Heart right ventricle (tissue), 16 donors: ENCODE measurements at regions of chr4 and their contacts with region 1.

Region 1: GRCh38 chr4:38319456-38320342 is 344.3 kb upstream of the KLF3 start:
- DNase-seq: peak; percentile 96 to 97
- ATAC-seq: peak; percentile 74 to 91 (median 85)
- H3K4me3 ChIP-seq: peak overlapping the region in 9 of 10 donors; percentile 22 to 45 (median 37)
- H3K27ac ChIP-seq: peak overlapping the region; percentile 14 to 92 (median 86)
- H3K4me1 ChIP-seq: peaks cover 6 to 48% (median 26%) of the 10 kb centered on the region in 9 donors
- H3K27me3 ChIP-seq: no peaks in the 10 kb centered on the region
- CTCF ChIP-seq: peak; percentile 99 to 100 (median 99)

Region 2: DNA sequence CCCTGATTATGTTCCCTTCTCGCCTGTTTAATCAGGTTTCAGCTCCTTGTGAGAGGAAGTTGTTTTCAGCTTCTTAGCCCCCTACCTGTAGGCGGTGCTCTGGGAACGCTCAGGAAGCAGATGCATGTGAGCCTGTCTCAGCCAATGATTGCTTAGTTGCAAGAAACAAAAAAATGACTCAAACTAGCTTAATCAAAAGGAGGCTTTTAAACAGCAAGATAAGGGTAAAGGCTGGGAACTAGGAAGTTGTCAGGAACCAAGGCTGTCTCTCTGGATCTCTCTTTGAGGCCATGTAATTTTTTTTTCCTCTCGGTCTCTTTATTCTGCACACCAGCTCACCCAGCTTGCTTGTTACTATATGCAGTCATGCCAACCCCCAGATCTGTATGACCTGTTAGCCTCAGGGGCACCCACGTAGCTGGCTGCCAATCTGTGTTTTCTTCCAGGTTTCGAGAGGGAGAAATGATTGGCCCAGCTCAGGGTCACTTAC is 250.4 kb before region 1 on chr4:
- intact Hi-C with region 1: loop called in 8 of 10 experiments (anchors 5 to 10 kb)
- DNase-seq: no peak
- ATAC-seq: peak in 6 of 8 donors; percentile 23 to 54 (median 36)
- H3K4me3 ChIP-seq: no peak overlapping the region
- H3K27ac ChIP-seq: peak overlapping the region in 7 of 10 donors; percentile 30 to 86 (median 59)
- H3K4me1 ChIP-seq: peaks cover 6 to 80% (median 53%) of the 10 kb centered on the region in 9 donors
- H3K27me3 ChIP-seq: no peaks in the 10 kb centered on the region
- CTCF ChIP-seq: peak in 6 of 9 donors; percentile 18 to 61 (median 37)

Region 3: GRCh38 chr4:38275331-38276100 is 44.2 kb before region 1 on chr4:
- intact Hi-C with region 1: no loop called
- DNase-seq: no peak
- ATAC-seq: no peak
- H3K4me3 ChIP-seq: no peak overlapping the region
- H3K27ac ChIP-seq: no peak overlapping the region
- H3K4me1 ChIP-seq: peaks cover 0 to 6% (median 0%) of the 10 kb centered on the region in 9 donors
- H3K27me3 ChIP-seq: no peaks in the 10 kb centered on the region
- CTCF ChIP-seq: no peak

Region 4: DNA sequence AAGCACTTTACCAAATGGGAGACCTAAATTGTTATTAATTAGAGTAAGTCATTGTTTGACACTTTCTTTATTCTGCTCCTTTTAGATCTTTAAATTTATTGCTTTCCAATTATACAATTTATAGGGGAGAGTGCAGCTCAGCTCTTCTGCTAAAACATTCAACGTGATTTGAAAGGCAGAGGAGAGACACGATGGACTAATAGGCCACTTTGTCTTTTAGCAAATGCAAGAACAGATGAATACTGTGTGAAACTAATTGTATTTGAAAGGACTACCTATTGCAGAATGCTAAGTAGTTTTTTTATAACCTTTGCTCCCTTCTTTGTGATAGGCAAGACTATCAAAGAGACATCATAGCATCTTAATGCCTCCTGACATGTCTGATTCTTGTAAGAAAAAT is 23.9 kb after region 1 on chr4:
- intact Hi-C with region 1: no loop called
- DNase-seq: no peak
- ATAC-seq: no peak
- H3K4me3 ChIP-seq: no peak overlapping the region
- H3K27ac ChIP-seq: no peak overlapping the region
- H3K4me1 ChIP-seq: no peaks in the 10 kb centered on the region
- H3K27me3 ChIP-seq: no peaks in the 10 kb centered on the region
- CTCF ChIP-seq: no peak

Region 5: DNA sequence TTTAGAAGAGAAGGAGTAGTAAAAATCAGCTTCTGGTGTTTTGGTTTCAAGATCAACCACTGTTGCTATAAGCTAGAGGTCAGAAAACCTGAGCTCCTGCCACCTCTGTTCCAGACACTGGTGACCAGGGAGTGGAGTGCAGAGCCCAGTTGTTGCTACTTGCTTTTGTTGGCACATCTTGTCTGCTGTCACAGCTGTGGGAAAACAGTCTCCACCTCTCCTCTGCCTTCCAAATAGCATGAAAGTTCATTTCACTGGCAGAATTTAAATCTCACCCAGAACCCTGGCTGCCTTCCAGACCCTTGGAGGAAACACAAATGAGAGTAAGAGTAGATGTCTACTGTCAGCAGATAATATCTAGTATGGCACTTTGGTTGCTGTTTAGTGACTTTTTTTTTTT is 46.8 kb after region 1 on chr4:
- intact Hi-C with region 1: loop called in 1 of 10 experiments (anchors 5 kb)
- DNase-seq: peak; percentile 18 to 19
- ATAC-seq: peak; percentile 64 to 89 (median 80)
- H3K4me3 ChIP-seq: no peak overlapping the region
- H3K27ac ChIP-seq: peak overlapping the region in 6 of 10 donors; percentile 2 to 37 (median 12)
- H3K4me1 ChIP-seq: peaks cover 0 to 23% (median 12%) of the 10 kb centered on the region in 9 donors
- H3K27me3 ChIP-seq: no peaks in the 10 kb centered on the region
- CTCF ChIP-seq: no peak

Region 6: DNA sequence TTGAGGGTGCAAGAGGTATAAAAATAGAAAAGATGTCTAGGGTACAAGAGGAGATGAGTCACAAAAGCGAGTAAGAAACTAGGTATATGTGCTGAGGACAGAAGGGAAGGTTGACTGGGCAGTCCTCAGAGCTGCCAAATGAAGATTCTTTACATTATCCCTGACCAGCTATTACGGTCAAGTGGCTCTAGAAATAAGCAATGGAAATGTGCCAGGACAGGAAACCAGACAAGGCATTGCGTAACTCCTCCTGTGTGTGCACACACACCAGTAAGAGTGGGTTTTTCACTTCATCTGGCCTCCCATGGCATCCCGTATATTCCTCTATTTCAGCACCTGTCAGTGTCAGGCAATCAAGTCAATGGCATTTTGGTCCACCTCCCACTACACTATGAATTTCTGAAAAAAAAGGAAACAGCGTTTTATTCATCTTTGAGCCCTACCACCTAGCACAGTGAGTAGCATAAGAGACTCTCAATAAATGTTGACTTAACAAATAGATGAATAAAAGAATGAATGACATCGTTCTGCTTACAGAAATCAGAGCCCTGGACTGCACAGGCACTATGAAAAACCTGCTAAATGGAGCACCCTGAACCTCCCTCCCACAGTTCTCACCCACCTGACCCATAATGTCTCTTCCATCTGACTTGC is 281.7 kb after region 1 on chr4:
- intact Hi-C with region 1: loop called in 1 of 10 experiments (anchors 10 kb)
- DNase-seq: no peak
- ATAC-seq: peak in 5 of 8 donors; percentile 14 to 61 (median 47)
- H3K4me3 ChIP-seq: no peak overlapping the region
- H3K27ac ChIP-seq: no peak overlapping the region
- H3K4me1 ChIP-seq: peaks cover 0 to 13% (median 0%) of the 10 kb centered on the region in 9 donors
- H3K27me3 ChIP-seq: no peaks in the 10 kb centered on the region
- CTCF ChIP-seq: no peak

Region 7: DNA sequence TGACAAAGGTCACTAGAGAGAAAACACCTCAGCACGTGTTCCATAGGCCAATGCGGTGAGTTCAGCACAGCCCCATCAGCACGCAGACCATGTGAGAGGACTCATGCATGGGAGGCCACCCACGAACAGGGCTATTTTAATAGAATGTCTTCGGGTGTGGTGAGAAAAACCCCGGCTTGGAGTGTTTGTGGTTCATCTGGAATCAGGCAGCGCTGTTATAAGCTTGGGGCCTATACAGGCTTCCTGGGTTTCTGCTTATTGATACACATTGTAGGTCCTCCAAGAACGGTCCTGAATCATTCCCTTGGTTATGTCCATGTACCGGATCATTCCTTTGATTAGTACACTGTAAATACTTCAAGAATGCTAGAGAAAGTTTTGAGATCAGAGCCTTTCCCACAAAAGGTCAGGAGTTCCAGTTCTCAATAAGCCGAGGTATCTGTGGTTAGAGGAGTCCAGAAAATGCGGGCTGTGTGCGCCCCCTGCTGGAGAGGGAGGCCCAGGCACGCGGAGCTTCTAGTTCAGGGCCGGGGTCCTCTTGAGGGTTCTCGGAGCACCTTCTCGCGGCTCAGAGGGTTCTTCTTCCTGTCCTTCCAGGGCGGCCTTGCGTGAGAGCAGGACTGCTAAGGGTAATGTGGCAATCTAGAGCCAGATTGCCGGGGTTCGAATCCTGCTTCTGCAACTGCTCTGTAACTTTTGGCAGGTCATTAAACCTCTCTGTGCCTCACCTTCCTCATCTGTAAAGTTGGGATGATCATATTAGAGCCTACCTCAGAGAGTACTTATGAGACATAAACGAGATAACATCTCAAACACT is 411.3 kb after region 1 on chr4:
- intact Hi-C with region 1: loop called in 8 of 10 experiments (anchors 2 to 10 kb)
- DNase-seq: peak; percentile 85 to 86
- ATAC-seq: peak; percentile 81 to 93 (median 88)
- H3K4me3 ChIP-seq: no peak overlapping the region
- H3K27ac ChIP-seq: no peak overlapping the region
- H3K4me1 ChIP-seq: peaks cover 0 to 18% (median 4%) of the 10 kb centered on the region in 9 donors
- H3K27me3 ChIP-seq: no peaks in the 10 kb centered on the region
- CTCF ChIP-seq: peak; percentile 91 to 99 (median 97)